Calu3 (cell line): ENCODE measurements at regions of chr12 and their contacts with region 1.

Region 1: DNA sequence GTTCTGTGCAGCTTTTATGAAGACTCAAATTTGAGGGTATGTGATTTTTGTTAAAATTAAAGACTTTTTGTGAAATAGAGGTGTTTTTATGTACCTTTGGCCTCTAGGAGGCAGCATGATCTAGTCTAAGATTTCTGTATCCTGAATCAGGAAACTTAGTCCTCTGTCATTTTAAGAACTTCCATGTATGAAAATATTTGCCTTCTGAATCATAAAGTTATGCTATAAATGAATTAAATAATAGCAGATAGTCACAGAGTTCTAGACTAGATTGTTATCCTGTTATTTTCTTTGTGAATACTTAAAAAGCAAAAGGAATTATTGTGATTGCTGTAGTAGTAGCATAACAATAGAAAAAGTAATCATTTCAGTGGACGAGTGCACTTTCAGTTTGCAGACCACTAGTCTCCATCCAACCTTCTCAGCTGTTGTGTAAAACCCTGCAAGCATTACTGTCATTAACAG is 56.3 kb downstream of the FGD4 start:
- DNase-seq: peak; percentile 46
- H3K4me3 Mint-ChIP-seq: no peak overlapping the region
- H3K27ac Mint-ChIP-seq: no peak overlapping the region
- H3K4me1 Mint-ChIP-seq: peaks cover 36% of the 10 kb centered on the region
- H3K27me3 Mint-ChIP-seq: no peaks in the 10 kb centered on the region
- CTCF ChIP-seq: no peak

Region 2: GRCh38 chr12:31406345-31406744 is 1049.3 kb before region 1 on chr12:
- CTCF ChIA-PET with region 1: interaction called, 10 read pairs
- intact Hi-C with region 1: no loop called
- DNase-seq: no peak
- H3K4me3 Mint-ChIP-seq: no peak overlapping the region
- H3K27ac Mint-ChIP-seq: no peak overlapping the region
- H3K4me1 Mint-ChIP-seq: no peaks in the 10 kb centered on the region
- H3K27me3 Mint-ChIP-seq: no peaks in the 10 kb centered on the region
- CTCF ChIP-seq: no peak

Region 3: DNA sequence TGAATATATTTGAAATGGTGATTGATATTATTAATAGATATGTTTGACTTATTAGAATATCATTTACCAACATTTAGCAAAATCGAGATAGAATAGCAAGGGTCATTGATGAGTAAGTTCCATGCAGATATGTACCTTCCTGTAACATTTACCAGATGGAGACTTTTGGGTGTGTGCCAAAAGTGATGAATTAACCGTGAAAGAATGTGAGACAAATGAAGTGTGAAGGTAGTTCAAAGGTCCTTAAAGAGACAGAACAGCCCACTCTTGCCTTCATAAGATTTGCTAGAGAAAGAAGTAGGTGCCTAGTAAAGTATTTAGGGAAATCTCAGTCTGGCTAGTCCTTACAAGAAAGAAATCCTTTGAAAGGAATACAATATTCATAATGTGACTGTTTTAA is 10.7 kb before region 1 on chr12:
- CTCF ChIA-PET with region 1: no interaction called
- intact Hi-C with region 1: loop called (anchors 1 kb)
- DNase-seq: peak; percentile 74
- H3K4me3 Mint-ChIP-seq: no peak overlapping the region
- H3K27ac Mint-ChIP-seq: peak overlapping the region; percentile 69
- H3K4me1 Mint-ChIP-seq: peaks cover 76% of the 10 kb centered on the region
- H3K27me3 Mint-ChIP-seq: no peaks in the 10 kb centered on the region
- CTCF ChIP-seq: no peak

Region 4: DNA sequence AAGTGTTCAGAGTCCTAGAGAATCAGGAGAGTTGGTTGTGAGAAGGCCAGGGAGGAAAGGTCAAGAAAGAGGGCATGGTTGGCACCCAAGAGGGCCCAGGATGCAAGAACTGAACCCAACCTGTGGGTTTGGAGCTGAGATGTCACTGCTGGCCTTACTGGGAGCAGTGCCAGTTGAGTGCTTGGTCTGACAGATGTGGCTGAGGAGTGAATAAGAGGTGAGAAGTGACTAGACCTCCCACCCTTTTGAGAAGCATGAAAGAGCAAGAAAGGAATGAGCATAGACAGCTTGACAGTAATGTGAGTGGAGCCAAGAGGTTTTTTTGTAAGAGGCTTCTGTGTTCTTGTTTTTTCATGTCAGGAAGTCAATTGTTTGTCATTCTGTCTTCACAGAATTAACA is 39.0 kb after region 1 on chr12:
- CTCF ChIA-PET with region 1: no interaction called
- intact Hi-C with region 1: no loop called
- DNase-seq: no peak
- H3K4me3 Mint-ChIP-seq: no peak overlapping the region
- H3K27ac Mint-ChIP-seq: no peak overlapping the region
- H3K4me1 Mint-ChIP-seq: peaks cover 12% of the 10 kb centered on the region
- H3K27me3 Mint-ChIP-seq: no peaks in the 10 kb centered on the region
- CTCF ChIP-seq: no peak

Region 5: DNA sequence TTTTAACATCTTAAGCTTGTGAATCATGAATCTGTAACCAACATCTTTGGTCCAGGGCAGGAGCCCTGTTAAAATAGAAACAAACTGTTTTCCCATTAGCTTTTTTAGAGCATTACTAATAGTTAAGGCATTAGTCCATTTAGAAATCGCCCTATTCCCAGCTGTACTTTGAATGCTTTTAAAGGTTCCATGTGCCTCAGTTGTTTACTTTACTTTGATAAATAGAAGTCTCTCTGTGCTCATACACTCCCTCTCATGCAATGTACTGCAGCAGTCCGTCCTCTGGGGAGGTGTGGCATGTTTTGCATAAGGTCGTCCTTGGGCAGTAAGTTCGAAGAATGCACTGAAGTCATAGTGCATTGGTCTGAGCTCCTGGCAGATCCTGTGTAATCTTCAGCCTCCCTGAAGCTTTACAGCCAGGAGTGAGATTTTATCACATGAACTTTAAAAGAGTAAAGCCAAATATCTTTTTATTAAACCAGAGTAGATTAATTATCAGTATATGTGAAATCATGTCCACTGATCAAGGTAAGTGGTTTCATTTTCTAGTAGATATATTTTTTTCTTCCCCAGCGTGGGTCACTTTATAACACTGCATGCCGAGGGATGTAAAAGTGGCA is 78.4 kb after region 1 on chr12:
- CTCF ChIA-PET with region 1: interaction called, 3 read pairs
- intact Hi-C with region 1: loop called (anchors 2 kb)
- DNase-seq: peak; percentile 62
- H3K4me3 Mint-ChIP-seq: peak overlapping the region; percentile 71
- H3K27ac Mint-ChIP-seq: peak overlapping the region; percentile 74
- H3K4me1 Mint-ChIP-seq: peaks cover 44% of the 10 kb centered on the region
- H3K27me3 Mint-ChIP-seq: no peaks in the 10 kb centered on the region
- CTCF ChIP-seq: no peak

Region 6: GRCh38 chr12:32659908-32660440 is 204.3 kb after region 1 on chr12:
- CTCF ChIA-PET with region 1: interaction called, 9 read pairs
- intact Hi-C with region 1: loop called (anchors 1 kb)
- DNase-seq: no peak
- H3K4me3 Mint-ChIP-seq: no peak overlapping the region
- H3K27ac Mint-ChIP-seq: no peak overlapping the region
- H3K4me1 Mint-ChIP-seq: no peaks in the 10 kb centered on the region
- H3K27me3 Mint-ChIP-seq: no peaks in the 10 kb centered on the region
- CTCF ChIP-seq: no peak